BJ (cell line): ENCODE measurements at regions of chr5 and their contacts with region 1.

Region 1: GRCh38 chr5:117454716-117455596 is 880.3 kb upstream of the SEMA6A start:
- DNase-seq: no peak
- H3K4me3 ChIP-seq: no peak overlapping the region
- H3K27me3 ChIP-seq: no peaks in the 10 kb centered on the region
- CTCF ChIP-seq: peak; percentile 73

Region 2: GRCh38 chr5:118611332-118611945 is 1156.5 kb after region 1 on chr5:
- CTCF ChIA-PET with region 1: interaction called, 22 read pairs
- POLR2A ChIA-PET with region 1: no interaction called
- DNase-seq: no peak
- H3K4me3 ChIP-seq: no peak overlapping the region
- H3K27me3 ChIP-seq: no peaks in the 10 kb centered on the region
- CTCF ChIP-seq: peak; percentile 78

Region 3: DNA sequence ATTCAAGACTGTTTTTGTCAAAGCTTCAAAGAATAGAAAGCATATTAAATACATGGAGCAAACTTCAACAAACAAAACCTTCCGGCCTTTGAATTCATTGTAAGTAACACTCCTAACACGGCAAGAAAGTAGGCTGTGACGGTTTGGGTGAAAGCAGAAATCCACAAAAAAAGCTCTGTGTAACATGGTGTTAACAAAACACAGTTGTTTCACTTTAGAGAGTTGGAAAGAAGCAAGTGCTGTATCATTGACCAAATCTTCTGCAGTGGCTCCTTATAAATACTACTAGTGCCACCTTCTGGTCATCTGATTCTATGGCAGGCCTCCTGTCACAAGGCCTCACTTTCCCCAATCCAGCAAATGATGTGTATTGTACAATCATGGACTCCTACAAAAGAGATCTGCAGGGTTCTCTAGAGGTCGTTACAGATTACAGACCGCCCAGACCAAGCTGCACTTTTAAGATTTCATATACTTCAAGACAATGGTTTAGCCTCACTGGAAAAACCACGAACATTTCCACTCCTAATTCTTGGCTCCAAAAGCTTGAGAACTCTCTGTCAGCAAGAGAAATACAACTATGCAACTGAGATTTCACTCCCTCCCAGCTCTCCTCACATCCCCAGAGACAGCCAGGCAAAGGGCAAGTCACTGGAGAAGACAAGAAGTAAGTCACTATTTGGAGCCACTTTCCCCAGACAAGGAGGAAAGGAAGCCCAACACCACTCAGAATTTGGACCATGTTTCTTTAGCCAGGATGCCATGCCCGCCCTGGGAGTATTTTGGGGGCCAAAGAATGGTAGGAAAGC is 1337.2 kb after region 1 on chr5:
- CTCF ChIA-PET with region 1: interaction called, 24 read pairs
- POLR2A ChIA-PET with region 1: no interaction called
- DNase-seq: peak; percentile 24
- H3K4me3 ChIP-seq: no peak overlapping the region; the same call in 1 of the 2 replicates
- H3K27me3 ChIP-seq: no peaks in the 10 kb centered on the region
- CTCF ChIP-seq: peak; percentile 82